CD4-positive, alpha-beta memory T cell (primary cell): ENCODE measurements at regions of chr9 and their contacts with region 1.

Region 1: DNA sequence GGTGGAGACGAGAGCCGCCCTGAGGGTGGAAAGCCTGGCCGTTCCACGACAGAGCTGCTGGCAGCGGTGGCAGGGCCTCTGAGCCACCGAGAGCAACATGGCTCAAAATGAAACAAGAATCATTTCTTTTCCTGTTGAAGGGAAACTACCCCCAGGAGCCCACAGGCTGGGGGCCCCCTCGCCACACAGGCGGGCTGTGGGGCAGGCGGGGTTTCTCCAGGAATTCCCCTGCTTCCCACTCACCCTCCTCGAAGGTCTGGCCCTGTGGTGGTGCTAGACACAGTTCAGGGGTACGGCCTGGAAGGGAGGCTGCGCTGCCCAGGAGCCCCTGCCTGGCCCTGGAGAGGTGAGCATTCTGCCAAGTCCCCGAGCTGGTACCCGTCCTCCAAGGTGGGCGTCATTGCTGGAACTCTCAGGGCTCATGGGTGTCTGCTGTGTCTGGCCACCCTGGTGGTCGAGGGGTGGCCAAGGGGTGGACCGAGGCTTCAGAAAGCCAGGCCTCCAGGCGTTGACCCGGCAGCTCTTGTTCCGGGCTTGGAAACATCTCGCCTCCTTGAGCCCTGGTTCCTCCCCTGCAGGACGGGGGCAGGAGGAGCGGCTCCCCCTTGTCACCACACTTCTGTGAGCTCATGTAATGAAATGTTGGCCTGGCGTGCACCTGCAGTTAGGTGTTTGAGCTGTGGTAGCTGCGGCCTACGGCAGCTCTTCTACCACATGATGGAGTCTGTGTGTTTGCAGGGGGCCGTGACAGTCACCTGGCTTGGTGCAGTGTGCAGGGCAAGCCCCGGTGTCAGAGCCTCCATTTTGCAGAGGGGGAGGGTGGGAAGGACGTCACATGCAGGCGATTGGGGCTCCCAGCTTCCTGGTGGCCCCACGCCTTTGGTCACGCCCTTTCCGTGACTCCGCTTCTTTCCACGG is 65.3 kb downstream of the RXRA start:
- DNase-seq: peak; percentile 80 to 96 (median 82)
- H3K4me3 ChIP-seq: peak overlapping the region; percentile 41 to 52
- H3K4me3 Mint-ChIP-seq: peak overlapping the region; percentile 79 to 90 (median 84)
- H3K27ac ChIP-seq: peak overlapping the region; percentile 97
- H3K27ac Mint-ChIP-seq: peak overlapping the region; percentile 97 to 99 (median 98)
- H3K4me1 ChIP-seq: peaks cover 67% of the 10 kb centered on the region
- H3K4me1 Mint-ChIP-seq: peaks cover 33 to 71% (median 55%) of the 10 kb centered on the region in 4 donors
- H3K27me3 ChIP-seq: no peaks in the 10 kb centered on the region
- H3K27me3 Mint-ChIP-seq: no peaks in the 10 kb centered on the region

Region 2: DNA sequence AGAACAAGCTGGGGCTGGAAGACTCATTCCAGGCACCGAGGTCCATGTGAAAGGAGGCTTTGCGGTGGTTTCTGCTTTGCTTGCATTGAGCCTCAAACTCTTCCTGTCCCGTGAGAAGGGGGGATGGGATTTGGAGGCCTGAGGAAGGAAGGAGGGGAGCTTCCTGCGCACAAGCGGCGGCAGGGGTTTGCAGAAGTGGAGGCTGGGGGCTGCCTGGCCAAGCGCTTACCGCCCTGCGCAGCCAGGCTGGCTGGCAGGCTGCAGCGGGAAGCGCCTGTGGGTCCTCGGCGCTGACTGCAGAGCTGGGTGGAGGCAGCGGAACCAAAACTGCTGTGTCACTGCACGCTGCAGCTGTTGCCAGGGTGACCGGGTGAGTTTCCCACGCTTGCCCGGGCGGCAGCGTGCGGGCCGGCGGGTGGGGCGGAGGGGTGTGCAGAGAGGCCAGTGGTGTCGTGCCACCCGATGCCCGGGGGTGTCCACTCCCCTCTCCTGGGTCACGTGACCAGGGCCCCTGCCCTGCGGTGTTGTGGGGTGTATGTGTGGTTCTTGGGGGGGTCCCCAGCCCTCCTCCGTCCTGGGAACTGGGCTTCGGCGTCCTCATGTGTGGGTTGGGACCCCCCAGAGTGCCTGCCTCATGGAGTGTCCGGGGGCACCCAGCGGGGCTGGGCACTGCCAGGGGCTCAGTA is 15.7 kb after region 1 on chr9:
- CTCF ChIA-PET with region 1: interaction called, 9 read pairs
- POLR2A ChIA-PET with region 1: interaction called, 31 read pairs
- intact Hi-C with region 1: loop called (anchors 2 kb)
- DNase-seq: peak; percentile 71 to 79 (median 79)
- H3K4me3 ChIP-seq: peak overlapping the region; percentile 48 to 55
- H3K4me3 Mint-ChIP-seq: peak overlapping the region; percentile 40 to 87 (median 80)
- H3K27ac ChIP-seq: peak overlapping the region; percentile 49
- H3K27ac Mint-ChIP-seq: peak overlapping the region; percentile 4 to 89 (median 75)
- H3K4me1 ChIP-seq: peaks cover 57% of the 10 kb centered on the region
- H3K4me1 Mint-ChIP-seq: peaks cover 24 to 60% (median 39%) of the 10 kb centered on the region in 4 donors
- H3K27me3 ChIP-seq: no peaks in the 10 kb centered on the region
- H3K27me3 Mint-ChIP-seq: no peaks in the 10 kb centered on the region

Region 3: DNA sequence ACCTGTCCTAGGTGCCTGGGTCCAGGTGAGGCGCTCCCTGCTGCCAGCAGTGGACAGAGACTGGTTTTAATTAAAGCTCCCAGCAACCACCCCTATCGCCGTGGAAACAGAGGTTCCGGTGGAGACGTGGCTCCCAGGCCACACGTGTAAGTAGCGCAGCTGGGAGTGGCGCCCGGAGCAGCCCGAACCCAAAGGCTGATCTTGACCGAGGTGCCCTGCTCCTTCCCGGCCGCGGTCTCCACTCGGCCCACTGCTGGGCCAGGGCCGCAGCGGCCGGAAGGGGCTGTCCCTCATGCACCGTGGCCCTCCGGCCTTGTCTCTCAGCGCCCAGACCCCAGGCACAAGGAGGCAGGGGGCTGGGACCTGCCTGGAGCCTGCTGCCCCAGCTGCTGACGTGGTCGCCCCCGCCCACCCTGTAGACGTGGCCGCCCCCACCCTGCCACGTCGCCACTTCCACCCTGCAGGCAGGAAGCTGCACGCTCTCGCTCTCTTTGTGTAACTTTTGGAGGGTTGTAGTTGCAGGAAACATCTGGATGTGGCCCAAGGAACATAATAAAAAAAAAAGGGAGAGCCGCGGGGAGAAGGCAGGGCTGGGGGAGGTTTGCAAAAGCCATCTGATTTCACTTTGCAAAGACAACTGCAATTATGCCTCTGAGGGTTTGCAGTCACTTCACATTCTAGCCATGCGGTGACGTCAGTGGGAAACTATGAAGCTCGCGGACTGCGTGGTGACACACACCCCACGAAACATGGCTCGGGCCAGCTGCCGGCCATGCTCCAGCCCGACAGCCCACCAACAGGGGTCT is 64.6 kb after region 1 on chr9:
- CTCF ChIA-PET with region 1: interaction called, 4 read pairs
- POLR2A ChIA-PET with region 1: interaction called, 15 read pairs
- intact Hi-C with region 1: no loop called
- DNase-seq: peak; percentile 76 to 83 (median 81)
- H3K4me3 ChIP-seq: peak overlapping the region; percentile 62 to 76
- H3K4me3 Mint-ChIP-seq: peak overlapping the region; percentile 73 to 94 (median 84)
- H3K27ac ChIP-seq: peak overlapping the region; percentile 64
- H3K27ac Mint-ChIP-seq: peak overlapping the region; percentile 86 to 96 (median 93)
- H3K4me1 ChIP-seq: peaks cover 22% of the 10 kb centered on the region
- H3K4me1 Mint-ChIP-seq: peaks cover 4 to 18% (median 9%) of the 10 kb centered on the region in 4 donors
- H3K27me3 ChIP-seq: no peaks in the 10 kb centered on the region
- H3K27me3 Mint-ChIP-seq: no peaks in the 10 kb centered on the region